ENCODE measurements at regions of chr9 and their contacts with region 1.

Region 1: DNA sequence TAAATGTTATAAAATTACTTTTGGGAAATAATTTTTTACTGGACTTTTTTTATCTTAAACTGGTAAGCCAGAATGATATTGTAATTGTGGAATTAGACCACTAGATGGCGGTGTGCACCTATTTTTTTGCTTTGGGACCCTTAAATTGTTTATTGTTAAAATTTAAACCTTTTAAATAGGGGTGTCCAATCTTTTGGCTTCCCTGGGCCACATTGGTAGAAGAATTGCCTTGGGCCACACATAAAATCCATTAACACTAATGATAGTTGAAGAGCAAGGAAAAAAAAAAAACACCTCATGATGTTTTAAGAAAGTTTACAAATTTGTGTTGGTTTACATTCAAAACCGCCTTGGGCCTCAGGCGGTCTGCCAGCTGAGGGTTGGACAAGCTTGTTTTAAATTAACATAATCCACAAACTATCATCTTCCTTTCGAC is 28.4 kb upstream of the GADD45G start:
- DNase-seq: peak in 3 of 9 experiments; percentile 28 to 66 (median 59)
- ATAC-seq: no peak
- H3K4me3 ChIP-seq: no peak overlapping the region
- H3K4me3 Mint-ChIP-seq: no peak overlapping the region
- H3K27ac ChIP-seq: no peak overlapping the region
- H3K27ac Mint-ChIP-seq: no peak overlapping the region
- H3K4me1 ChIP-seq: peaks cover 19% of the 10 kb centered on the region
- H3K4me1 Mint-ChIP-seq: peaks cover 19% of the 10 kb centered on the region
- H3K27me3 ChIP-seq: no peaks in the 10 kb centered on the region
- H3K27me3 Mint-ChIP-seq: peaks cover 15% of the 10 kb centered on the region
- CTCF ChIP-seq: peak; percentile 94

Region 2: DNA sequence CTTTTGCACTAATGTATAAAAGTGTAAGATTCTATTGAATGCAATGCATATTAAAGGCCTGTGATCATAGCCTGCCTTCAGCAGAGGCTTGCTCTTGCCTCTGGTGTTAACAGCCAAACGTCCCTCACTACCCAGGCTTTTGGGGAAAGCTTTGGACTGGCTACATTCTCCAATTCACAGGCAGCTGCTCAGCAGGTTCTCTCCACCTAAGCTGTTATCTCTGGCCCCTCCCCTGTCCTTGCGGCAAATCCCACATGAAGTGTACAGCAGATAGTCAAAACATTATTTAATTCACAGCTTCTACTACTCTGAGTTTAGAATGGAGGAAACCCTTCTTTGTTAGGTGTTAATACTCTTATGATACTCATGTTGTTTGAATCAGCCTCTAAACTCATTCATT is 17.5 kb before region 1 on chr9:
- CTCF ChIA-PET with region 1: interaction called, 11 read pairs
- POLR2A ChIA-PET with region 1: no interaction called
- intact Hi-C with region 1: no loop called
- DNase-seq: no peak
- ATAC-seq: no peak
- H3K4me3 ChIP-seq: no peak overlapping the region
- H3K4me3 Mint-ChIP-seq: no peak overlapping the region
- H3K27ac ChIP-seq: no peak overlapping the region
- H3K27ac Mint-ChIP-seq: no peak overlapping the region
- H3K4me1 ChIP-seq: peaks cover 18% of the 10 kb centered on the region
- H3K4me1 Mint-ChIP-seq: peaks cover 18% of the 10 kb centered on the region
- H3K27me3 ChIP-seq: no peaks in the 10 kb centered on the region
- H3K27me3 Mint-ChIP-seq: no peaks in the 10 kb centered on the region
- CTCF ChIP-seq: no peak

Region 3: GRCh38 chr9:89740722-89741121 is 164.3 kb after region 1 on chr9:
- CTCF ChIA-PET with region 1: no interaction called
- POLR2A ChIA-PET with region 1: no interaction called
- intact Hi-C with region 1: no loop called
- DNase-seq: peak in 4 of 9 experiments; percentile 2 to 40 (median 20)
- ATAC-seq: no peak
- H3K4me3 ChIP-seq: no peak overlapping the region
- H3K4me3 Mint-ChIP-seq: peak overlapping the region; percentile 48
- H3K27ac ChIP-seq: no peak overlapping the region
- H3K27ac Mint-ChIP-seq: no peak overlapping the region
- H3K4me1 ChIP-seq: peaks cover 54% of the 10 kb centered on the region
- H3K4me1 Mint-ChIP-seq: peaks cover 67% of the 10 kb centered on the region
- H3K27me3 ChIP-seq: no peaks in the 10 kb centered on the region
- H3K27me3 Mint-ChIP-seq: no peaks in the 10 kb centered on the region
- CTCF ChIP-seq: no peak

Region 4: DNA sequence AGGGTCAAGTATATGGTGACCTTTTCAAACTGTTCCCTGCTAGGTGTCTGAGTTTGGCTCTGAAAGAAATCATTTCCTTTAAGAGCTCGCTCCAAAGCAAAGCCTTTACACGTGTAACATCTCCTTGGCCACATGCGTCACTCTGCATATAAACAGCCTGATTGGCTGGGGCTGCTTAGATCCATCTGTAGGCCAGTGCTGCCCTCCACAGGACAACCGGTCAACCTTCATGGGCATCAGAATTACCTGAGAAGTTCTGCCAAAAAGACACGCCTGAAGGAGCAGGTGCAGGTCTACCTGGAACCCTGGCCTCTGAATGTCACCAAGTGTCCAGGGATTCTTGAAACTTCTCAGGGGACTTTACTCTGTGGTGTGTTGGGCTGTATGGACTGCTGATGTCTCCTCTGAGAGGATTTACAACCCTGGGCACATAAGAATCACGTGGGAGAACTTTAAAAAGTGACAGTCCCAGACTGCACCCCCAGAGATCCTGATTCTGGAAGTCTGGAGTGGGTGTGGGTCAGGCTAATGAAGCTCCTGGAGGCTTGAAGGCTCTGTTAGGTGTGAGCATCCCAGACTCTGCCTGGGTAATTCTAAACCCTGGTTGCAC is 526.0 kb after region 1 on chr9:
- CTCF ChIA-PET with region 1: interaction called, 6 read pairs
- POLR2A ChIA-PET with region 1: no interaction called
- intact Hi-C with region 1: loop called (anchors 1 to 2 kb)
- DNase-seq: peak; percentile 50 to 88 (median 71)
- ATAC-seq: peak; percentile 100
- H3K4me3 ChIP-seq: no peak overlapping the region
- H3K4me3 Mint-ChIP-seq: no peak overlapping the region
- H3K27ac ChIP-seq: no peak overlapping the region
- H3K27ac Mint-ChIP-seq: no peak overlapping the region
- H3K4me1 ChIP-seq: peaks cover 4% of the 10 kb centered on the region
- H3K4me1 Mint-ChIP-seq: peaks cover 5% of the 10 kb centered on the region
- H3K27me3 ChIP-seq: no peaks in the 10 kb centered on the region
- H3K27me3 Mint-ChIP-seq: peaks cover 13% of the 10 kb centered on the region
- CTCF ChIP-seq: peak; percentile 58

Region 5: DNA sequence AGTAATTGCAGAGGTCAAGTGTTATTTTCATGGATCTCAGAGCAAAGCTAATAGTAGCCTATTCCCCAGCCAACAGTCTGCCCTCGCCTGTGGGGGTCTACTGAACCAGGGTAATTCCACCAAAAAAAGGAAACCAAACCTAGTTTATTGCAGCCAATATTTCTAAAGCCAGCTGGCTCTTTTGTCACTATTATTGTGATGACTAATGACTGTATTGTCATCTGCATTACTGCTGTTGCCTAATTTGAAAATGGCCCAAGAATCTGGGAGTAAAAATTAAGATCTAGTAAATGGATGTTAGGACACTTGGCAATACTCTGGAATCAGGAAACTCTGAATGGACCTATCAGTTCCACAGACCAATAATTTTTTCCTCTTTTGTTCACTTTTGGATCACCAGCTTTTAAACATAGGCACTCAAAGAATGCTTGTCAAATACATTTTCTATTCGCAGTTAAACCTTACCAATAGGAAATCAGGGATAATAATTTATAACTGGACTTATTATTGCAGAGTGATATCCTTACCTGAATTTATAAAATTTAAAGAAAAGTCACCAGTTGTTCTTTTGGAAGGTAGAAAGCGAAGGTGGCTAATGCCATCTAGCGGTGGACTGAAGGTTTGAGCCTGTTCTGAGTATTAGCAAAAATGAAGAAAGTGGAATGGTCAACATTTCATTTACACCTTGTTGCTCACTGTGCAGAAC is 1294.4 kb after region 1 on chr9:
- CTCF ChIA-PET with region 1: interaction called, 4 read pairs
- POLR2A ChIA-PET with region 1: no interaction called
- intact Hi-C with region 1: loop called (anchors 1 to 2 kb)
- DNase-seq: peak in 6 of 9 experiments; percentile 7 to 65 (median 50)
- ATAC-seq: no peak
- H3K4me3 ChIP-seq: no peak overlapping the region
- H3K4me3 Mint-ChIP-seq: no peak overlapping the region
- H3K27ac ChIP-seq: no peak overlapping the region
- H3K27ac Mint-ChIP-seq: no peak overlapping the region
- H3K4me1 ChIP-seq: no peaks in the 10 kb centered on the region
- H3K4me1 Mint-ChIP-seq: no peaks in the 10 kb centered on the region
- H3K27me3 ChIP-seq: no peaks in the 10 kb centered on the region
- H3K27me3 Mint-ChIP-seq: no peaks in the 10 kb centered on the region
- CTCF ChIP-seq: peak; percentile 95